Right ventricle myocardium inferior (tissue), 1 donor: ENCODE measurements at regions of chr6 and their contacts with region 1.

Region 1: DNA sequence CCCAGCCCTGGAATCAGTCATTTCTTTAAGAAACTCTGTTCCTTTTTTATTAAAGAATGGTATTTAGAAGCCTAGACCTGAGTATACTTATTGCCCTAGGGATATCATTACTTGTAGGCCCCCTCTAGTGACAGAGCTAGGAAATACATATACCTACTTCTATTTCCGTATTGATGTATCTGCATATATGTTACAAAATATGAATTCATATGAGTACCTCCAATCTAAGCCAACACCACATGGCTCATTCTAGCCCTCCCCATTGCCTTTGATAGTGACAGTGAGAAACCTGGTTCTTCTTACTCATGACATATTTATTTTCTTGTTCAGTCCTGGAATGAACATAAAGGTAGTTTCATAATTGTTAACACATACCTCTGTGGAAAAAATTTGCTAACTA is 137.2 kb downstream of the FARS2 start:
- DNase-seq: no peak
- ATAC-seq: no peak

Region 2: DNA sequence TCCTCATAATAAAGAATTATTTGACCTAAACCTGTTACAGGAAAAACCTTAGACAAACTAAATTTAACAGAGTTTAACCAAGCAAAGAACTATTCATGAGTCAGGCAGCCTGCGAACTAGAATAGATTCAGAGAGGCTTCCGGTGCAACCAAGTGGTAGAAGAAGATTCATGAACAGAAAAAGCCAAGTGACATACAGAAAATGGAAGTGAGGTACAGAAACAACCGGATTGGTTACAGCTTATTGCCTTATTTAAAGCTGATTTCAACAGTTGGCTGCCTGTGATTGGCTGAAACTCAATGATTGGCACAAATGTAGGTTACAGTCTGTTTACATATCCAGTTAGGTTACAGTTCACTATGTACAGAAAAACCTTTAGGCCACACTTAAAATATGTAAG is 303.3 kb before region 1 on chr6:
- intact Hi-C with region 1: no loop called
- DNase-seq: no peak
- ATAC-seq: no peak

Region 3: DNA sequence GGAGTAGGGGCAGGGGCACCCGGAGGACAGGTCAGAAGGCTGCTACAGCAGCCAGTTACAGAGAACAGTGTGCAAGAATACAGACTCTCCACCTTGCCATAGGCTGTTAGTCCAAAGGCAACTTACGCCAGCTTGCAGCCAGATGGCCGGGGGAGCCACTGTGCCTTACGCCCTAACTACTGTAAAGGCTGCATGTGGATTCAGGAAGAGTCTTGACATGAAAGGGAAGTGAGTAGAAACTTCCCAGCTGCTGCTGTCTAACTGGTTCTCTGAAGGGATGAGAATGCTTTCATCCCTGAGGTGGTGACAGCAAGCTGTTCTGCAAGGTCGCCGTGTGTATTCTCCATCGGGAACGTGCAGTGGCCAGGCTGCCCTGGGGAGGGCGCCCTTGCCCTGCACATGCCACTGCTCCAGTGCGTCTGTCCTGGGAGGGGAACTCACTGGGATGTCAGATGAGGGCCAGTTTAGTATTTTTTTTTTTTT is 183.9 kb before region 1 on chr6:
- intact Hi-C with region 1: loop called (anchors 10 kb)
- DNase-seq: peak; percentile 72
- ATAC-seq: peak; percentile 90

Region 4: DNA sequence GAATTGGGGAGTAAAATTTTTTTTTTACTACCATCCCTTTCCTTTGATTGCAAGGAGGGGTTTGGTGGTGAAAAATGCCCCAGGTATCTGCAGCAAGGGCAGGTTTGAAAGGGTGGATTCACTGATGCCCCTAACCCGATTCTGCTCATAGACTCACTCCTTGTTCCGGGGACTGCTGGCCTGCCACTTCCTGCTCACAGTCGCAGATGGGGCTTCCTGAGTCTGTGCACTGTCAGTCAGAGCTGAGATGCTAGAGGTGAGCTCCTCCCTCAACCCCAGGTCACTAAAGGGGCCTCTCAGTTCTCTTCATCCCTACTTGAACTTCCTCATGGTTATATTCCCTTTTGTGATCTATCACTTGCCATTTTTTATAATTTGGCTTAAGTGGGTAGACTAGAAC is 220.7 kb after region 1 on chr6:
- intact Hi-C with region 1: no loop called
- DNase-seq: no peak
- ATAC-seq: no peak

Region 5: DNA sequence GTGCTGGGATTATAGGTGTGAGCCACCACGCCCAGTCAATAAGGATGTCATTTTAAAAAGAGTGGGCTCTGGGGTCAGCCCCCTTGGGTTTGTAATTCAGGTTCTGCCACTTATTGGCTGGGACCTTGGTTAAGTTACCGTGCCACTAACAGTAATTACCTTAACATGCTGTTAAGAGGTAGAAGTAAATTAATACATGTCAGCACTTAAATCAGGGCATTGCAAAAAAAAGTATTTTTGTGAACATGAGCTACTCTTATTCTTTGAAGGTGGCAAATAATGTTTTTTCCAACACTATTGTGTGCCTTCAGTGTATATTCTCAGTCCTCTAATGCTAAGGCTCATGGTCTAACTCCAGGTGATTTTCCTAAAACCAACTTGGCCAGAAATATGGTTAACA is 812.5 kb after region 1 on chr6:
- intact Hi-C with region 1: no loop called
- DNase-seq: no peak
- ATAC-seq: no peak